ENCODE measurements at regions of chr16 and their contacts with region 1.

Region 1: DNA sequence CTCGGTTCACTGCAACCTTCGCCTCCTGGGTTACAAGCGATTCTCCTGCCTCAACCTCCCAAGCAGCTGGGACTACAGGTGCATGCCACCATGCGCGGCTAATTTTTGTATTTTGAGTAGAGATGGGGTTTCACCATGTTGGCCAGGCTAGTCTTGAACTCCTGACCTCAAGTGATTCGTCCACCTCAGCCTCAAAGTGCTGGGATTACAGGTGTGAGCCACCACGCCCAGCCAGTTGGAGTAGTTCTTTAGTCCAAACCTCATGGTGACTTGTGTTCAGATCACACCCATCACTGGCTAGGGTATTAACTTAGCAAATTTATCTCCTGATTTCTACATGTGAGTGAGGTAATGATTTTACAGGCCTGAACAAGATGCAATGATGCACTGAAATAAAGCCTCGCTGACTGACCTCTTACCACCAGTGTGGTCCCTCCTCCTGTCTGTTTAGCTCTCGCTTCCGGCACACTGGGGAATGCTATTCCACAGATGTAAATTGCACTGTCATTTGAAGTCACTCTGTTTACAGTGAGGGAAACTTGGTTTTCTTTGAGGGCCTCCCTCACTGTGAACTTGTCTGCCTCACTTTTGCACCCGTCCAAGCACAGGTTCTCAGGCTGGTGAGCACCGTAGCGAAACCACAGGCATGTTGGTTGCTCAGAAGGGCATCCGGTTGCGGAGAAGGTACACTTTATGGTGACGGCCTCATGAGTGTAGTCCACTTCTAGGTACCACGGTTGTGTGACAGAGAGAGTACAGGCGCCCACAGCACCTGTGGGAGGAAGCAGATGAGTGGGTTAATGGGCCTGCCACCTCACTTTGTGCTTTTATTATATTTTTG is 5.5 kb downstream of the IGSF6 start:
- DNase-seq: peak; percentile 73 to 89 (median 79)
- H3K4me3 ChIP-seq: peak overlapping the region in 1 of 2 donors; percentile 4
- H3K4me3 Mint-ChIP-seq: peak overlapping the region; percentile 68 to 96 (median 81)
- H3K27ac ChIP-seq: peak overlapping the region; percentile 61
- H3K27ac Mint-ChIP-seq: peak overlapping the region; percentile 91 to 98 (median 95)
- H3K4me1 ChIP-seq: peaks cover 60% of the 10 kb centered on the region
- H3K4me1 Mint-ChIP-seq: peaks cover 32 to 66% (median 49%) of the 10 kb centered on the region in 4 donors
- H3K27me3 ChIP-seq: no peaks in the 10 kb centered on the region
- H3K27me3 Mint-ChIP-seq: no peaks in the 10 kb centered on the region

Region 2: DNA sequence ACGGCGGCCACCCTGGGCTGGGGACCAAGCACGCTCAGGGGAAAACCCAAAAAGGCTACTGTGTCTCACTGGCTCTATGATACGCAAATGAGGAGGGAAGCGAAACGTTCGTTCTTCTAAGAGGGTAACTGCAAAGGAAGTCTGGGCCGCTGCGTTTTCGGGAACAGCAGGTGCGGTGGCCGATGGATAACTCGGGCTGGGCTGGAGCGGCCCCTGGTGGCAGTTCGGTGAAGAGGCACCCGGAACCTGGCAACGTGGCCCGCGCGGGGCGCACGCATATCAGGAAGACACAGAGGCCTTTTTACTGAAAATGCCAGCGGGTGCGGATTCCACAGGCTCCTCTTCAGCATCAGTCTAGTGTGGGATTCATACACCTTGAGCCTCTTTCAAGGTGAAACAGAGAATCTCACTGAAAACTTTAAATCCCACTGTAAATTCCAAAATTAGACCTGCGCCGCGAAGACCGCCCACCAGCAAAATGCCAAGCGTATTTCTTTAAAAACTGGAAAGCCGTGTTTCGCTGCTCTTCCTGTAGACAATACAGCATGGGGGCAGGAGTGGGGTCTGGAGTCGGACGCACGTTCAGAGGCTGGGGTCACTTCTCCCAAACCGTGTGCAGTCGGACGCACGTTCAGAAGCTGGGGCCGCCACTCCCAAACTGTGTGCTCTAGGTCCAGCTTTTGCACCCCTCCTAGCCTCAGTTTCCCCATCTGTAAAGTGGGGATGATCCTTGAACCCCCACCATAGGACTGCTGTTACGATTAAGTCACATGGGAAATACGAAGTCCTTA is 92.0 kb before region 1 on chr16:
- CTCF ChIA-PET with region 1: no interaction called
- POLR2A ChIA-PET with region 1: no interaction called
- intact Hi-C with region 1: no loop called
- DNase-seq: peak; percentile 84 to 88 (median 87)
- H3K4me3 ChIP-seq: no peak overlapping the region
- H3K4me3 Mint-ChIP-seq: peak overlapping the region; percentile 53 to 87 (median 75)
- H3K27ac ChIP-seq: no peak overlapping the region
- H3K27ac Mint-ChIP-seq: peak overlapping the region in 6 of 7 donors; percentile 9 to 75 (median 51)
- H3K4me1 ChIP-seq: peaks cover 9% of the 10 kb centered on the region
- H3K4me1 Mint-ChIP-seq: peaks cover 3 to 12% (median 6%) of the 10 kb centered on the region in 4 donors
- H3K27me3 ChIP-seq: no peaks in the 10 kb centered on the region
- H3K27me3 Mint-ChIP-seq: peaks cover 0 to 5% of the 10 kb centered on the region in 2 donors

Region 3: GRCh38 chr16:21584817-21585216 is 62.1 kb before region 1 on chr16:
- CTCF ChIA-PET with region 1: interaction called, 105 read pairs
- POLR2A ChIA-PET with region 1: interaction called, 3 read pairs
- intact Hi-C with region 1: no loop called
- DNase-seq: no peak
- H3K4me3 ChIP-seq: no peak overlapping the region
- H3K4me3 Mint-ChIP-seq: no peak overlapping the region
- H3K27ac ChIP-seq: no peak overlapping the region
- H3K27ac Mint-ChIP-seq: no peak overlapping the region
- H3K4me1 ChIP-seq: no peaks in the 10 kb centered on the region
- H3K4me1 Mint-ChIP-seq: peaks cover 0 to 5% (median 2%) of the 10 kb centered on the region in 4 donors
- H3K27me3 ChIP-seq: no peaks in the 10 kb centered on the region
- H3K27me3 Mint-ChIP-seq: peaks cover 0 to 1% of the 10 kb centered on the region in 2 donors

Region 4: DNA sequence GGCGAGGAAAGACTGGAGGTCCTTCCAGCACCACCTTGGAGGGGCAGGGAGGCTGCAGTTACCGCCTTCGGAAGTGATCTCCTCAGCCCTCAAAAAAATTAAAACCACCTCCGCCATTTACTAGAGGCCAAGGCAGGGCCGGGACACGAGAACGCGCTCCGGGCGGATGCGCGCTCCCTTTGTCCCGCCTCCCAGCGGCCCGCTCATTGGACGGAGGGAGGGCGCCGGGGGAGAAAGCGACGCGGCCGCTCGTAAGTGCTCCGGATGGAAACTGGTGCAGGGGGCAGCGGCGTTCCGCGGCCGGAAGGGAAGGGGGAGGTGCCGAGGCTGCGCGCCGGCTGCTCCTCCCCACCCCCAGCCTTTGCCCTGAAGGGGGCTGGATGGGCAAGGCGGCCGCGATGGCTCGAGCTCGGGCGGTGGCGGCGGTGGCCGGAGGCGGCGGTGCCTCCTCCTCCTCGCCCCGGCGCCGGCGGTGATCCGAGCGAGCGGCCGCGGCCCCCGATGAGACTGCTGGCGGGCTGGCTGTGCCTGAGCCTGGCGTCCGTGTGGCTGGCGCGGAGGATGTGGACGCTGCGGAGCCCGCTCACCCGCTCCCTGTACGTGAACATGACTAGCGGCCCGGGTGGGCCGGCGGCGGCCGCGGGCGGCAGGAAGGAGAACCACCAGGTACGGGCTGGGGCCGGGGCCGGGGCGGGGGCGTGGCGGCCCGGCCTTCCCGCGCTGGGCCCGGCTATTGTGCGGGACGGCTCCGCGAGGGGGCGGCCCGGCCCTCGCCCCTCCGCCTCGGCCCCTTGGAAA is 47.5 kb before region 1 on chr16 and contains the start of gene METTL9:
- CTCF ChIA-PET with region 1: interaction called, 8 read pairs
- POLR2A ChIA-PET with region 1: interaction called, 26 read pairs
- intact Hi-C with region 1: loop called (anchors 2 kb)
- DNase-seq: peak; percentile 94 to 96 (median 94)
- H3K4me3 ChIP-seq: peak within 1 kb of the TSS; percentile 65 to 80
- H3K4me3 Mint-ChIP-seq: peak within 1 kb of the TSS; percentile 90 to 97 (median 92)
- H3K27ac ChIP-seq: peak within 1 kb of the TSS; percentile 87
- H3K27ac Mint-ChIP-seq: peak within 1 kb of the TSS; percentile 82 to 99 (median 95)
- H3K4me1 ChIP-seq: peaks cover 57% of the 10 kb centered on the region
- H3K4me1 Mint-ChIP-seq: peaks cover 27 to 66% (median 49%) of the 10 kb centered on the region in 4 donors
- H3K27me3 ChIP-seq: no peaks in the 10 kb centered on the region
- H3K27me3 Mint-ChIP-seq: no peaks in the 10 kb centered on the region
- total RNA-seq, gene METTL9: 71.1 to 92.8 TPM

Region 5: DNA sequence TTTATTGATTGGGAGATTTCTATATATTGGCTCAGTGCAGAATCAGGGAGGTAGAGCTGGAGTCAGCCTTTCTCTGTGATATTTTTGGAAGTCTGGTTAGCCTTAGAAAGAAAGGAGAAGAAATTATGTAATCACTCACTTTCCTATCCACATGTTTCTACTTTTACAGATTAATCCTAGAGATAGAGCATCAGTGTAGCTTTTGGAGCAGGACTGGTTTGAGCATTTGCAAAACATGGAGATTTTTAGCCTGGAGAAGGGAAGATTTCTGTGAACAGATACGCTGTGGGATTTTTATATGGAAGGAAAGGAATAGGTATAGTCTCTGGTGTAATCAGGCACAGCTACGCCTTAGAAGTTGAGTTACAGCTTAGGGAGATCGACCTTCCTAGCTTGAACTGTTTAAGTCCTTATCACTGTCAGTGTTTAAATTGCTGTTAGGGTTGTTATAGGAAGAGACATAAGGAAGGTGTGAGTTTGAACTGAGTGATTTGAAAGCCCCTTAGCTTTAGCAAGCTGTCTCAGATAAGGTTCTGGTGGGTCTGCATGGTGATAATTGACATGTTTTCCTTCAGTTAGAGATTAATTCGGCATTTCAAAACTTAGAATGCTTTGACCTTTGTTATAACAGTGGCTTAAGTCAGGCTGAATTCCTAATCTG is 27.0 kb before region 1 on chr16:
- CTCF ChIA-PET with region 1: interaction called, 3 read pairs
- POLR2A ChIA-PET with region 1: interaction called, 10 read pairs
- intact Hi-C with region 1: no loop called
- DNase-seq: no peak
- H3K4me3 ChIP-seq: no peak overlapping the region
- H3K4me3 Mint-ChIP-seq: peak overlapping the region in 2 of 8 donors; percentile 4 to 49
- H3K27ac ChIP-seq: no peak overlapping the region
- H3K27ac Mint-ChIP-seq: peak overlapping the region in 6 of 7 donors; percentile 1 to 84 (median 66)
- H3K4me1 ChIP-seq: peaks cover 33% of the 10 kb centered on the region
- H3K4me1 Mint-ChIP-seq: peaks cover 32 to 81% (median 56%) of the 10 kb centered on the region in 4 donors
- H3K27me3 ChIP-seq: no peaks in the 10 kb centered on the region
- H3K27me3 Mint-ChIP-seq: no peaks in the 10 kb centered on the region

Region 6: DNA sequence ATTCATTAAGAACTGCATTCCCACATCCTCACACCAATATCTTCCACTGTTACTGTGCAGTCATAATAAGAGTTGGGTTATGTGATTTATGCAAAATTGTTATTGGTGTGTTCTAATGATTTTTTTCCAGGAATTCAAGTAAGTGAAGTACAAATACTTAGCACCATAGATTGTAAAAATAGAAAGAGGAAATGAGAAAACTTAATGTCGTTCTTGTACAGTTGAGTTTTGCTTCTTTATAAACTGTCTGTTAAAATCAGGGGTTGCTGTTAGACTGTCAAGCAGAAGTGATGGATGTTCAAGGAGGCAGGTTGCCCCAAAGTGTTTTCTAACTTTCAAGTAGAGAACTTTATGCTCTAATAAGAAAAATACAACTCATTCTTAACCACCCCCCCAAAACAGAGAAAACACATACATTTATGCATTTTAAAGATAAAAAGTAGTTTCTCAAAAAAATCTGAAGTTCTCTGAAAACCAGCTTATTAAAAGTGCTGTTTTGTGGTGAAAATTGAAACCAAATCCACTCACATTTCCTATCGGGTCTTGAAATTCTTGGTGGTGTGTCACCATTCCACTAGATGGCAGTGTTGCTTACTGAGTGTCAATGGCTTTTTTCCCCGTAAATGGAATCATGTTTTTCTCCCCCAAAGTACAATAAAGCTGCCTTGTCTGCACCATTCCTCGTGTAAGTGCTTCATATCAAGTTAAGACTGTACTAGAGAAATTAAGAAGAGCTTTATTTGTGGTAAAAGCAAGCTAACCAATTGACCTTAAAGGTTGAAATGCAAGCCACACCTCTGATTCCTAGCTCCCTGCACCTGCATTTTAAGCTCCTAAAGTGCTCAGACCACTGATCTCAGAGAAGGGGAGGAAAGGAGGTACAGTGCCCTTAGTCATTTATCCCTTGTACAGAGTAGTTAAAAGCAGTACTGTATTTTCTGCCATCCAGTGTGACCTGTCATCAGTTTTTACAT is 10.1 kb after region 1 on chr16:
- CTCF ChIA-PET with region 1: interaction called, 83 read pairs
- POLR2A ChIA-PET with region 1: interaction called, 19 read pairs
- intact Hi-C with region 1: loop called (anchors 2 kb)
- DNase-seq: peak; percentile 60 to 69 (median 66)
- H3K4me3 ChIP-seq: no peak overlapping the region
- H3K4me3 Mint-ChIP-seq: peak overlapping the region in 5 of 8 donors; percentile 32 to 59 (median 49)
- H3K27ac ChIP-seq: no peak overlapping the region
- H3K27ac Mint-ChIP-seq: peak overlapping the region in 6 of 7 donors; percentile 1 to 86 (median 75)
- H3K4me1 ChIP-seq: peaks cover 32% of the 10 kb centered on the region
- H3K4me1 Mint-ChIP-seq: peaks cover 31 to 50% (median 40%) of the 10 kb centered on the region in 4 donors
- H3K27me3 ChIP-seq: no peaks in the 10 kb centered on the region
- H3K27me3 Mint-ChIP-seq: no peaks in the 10 kb centered on the region

Region 7: GRCh38 chr16:21719283-21719682 is 72.3 kb after region 1 on chr16:
- CTCF ChIA-PET with region 1: no interaction called
- POLR2A ChIA-PET with region 1: no interaction called
- intact Hi-C with region 1: no loop called
- DNase-seq: no peak
- H3K4me3 ChIP-seq: no peak overlapping the region
- H3K4me3 Mint-ChIP-seq: no peak overlapping the region
- H3K27ac ChIP-seq: no peak overlapping the region
- H3K27ac Mint-ChIP-seq: no peak overlapping the region
- H3K4me1 ChIP-seq: no peaks in the 10 kb centered on the region
- H3K4me1 Mint-ChIP-seq: peaks cover 0 to 4% (median under 1%) of the 10 kb centered on the region in 4 donors
- H3K27me3 ChIP-seq: no peaks in the 10 kb centered on the region
- H3K27me3 Mint-ChIP-seq: no peaks in the 10 kb centered on the region

Measured in CD4-positive, alpha-beta memory T cell (primary cell).